Activated B cell treated with CpG ODN at 0.5 μM for 24 hours (primary cell): ENCODE measurements at regions of chr9 and their contacts with region 1.

Region 1: DNA sequence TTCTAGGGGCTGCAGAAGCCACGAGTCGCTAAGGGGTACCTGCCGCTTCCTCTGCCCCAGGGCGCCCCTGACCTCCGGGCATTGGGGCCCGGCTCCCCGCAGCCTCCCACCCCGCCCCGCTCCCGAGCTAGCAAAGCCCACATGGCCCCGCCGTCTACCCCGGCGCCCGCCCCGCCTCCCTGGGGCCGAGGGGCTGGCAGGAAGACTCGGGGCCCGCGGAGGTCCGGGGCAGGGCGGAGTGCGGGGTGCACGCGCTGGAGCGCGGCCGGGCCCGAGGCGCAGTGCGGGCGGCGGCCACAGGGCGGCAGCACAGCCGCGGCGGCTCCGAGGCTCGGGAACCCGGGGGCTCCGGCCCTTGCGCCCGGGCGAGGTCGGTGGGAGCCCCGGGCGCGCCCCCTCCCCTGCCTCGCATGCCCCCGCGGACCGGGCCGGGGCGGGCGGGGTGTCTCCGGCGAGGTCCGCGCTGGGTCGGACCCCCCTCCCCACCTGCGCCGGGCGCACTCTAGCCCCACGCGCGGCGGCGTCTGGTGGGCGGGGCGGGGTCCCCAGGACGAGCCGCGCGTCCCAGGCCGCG is 6.7 kb downstream of the NRARP start:
- DNase-seq: peak; percentile 75
- ATAC-seq: peak; percentile 93
- H3K4me3 Mint-ChIP-seq: no peak overlapping the region
- H3K27ac Mint-ChIP-seq: no peak overlapping the region
- H3K4me1 Mint-ChIP-seq: peaks cover 13% of the 10 kb centered on the region
- H3K27me3 Mint-ChIP-seq: peaks cover 26% of the 10 kb centered on the region
- CTCF ChIP-seq: no peak

Region 2: DNA sequence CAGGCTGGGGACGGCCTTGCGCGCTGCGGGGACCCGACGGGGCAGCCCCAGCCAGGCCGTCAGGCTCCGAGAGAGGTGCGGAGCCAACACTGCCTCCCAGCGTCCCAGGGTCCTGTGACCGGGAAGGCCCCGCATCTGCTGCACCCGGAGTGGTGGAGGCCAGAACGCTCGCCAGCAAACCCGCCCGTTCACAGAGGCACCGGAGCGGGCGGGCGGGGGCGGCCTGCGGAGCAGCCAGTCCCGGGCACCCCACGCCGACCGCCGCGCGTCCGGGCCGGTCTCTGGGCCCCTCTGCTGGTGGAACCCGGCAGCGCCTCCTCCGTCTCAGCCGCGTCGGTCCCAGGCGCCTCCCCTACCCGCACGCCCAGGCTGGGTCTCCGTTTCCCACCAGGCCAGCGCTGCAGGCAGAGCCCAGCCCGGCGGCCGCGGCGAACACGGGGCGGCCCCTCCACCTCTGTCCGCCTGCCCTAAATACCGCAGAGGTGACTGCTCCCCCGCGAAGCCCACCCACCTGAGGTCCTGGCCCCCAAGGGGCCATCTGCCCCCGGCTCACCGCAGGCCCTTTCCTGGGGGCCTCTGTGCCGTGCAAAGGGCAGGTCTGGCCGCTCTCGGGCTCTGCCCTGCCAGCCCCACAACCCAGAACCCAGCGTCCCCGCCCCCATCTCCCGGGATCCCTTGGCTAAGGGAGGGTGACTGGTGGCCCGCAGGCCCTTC is 111.7 kb after region 1 on chr9:
- CTCF ChIA-PET with region 1: no interaction called
- POLR2A ChIA-PET with region 1: no interaction called
- intact Hi-C with region 1: loop called (anchors 2 kb)
- DNase-seq: peak; percentile 55
- ATAC-seq: peak; percentile 81
- H3K4me3 Mint-ChIP-seq: no peak overlapping the region
- H3K27ac Mint-ChIP-seq: no peak overlapping the region
- H3K4me1 Mint-ChIP-seq: peaks cover 21% of the 10 kb centered on the region
- H3K27me3 Mint-ChIP-seq: peaks cover 2% of the 10 kb centered on the region
- CTCF ChIP-seq: no peak

Region 3: DNA sequence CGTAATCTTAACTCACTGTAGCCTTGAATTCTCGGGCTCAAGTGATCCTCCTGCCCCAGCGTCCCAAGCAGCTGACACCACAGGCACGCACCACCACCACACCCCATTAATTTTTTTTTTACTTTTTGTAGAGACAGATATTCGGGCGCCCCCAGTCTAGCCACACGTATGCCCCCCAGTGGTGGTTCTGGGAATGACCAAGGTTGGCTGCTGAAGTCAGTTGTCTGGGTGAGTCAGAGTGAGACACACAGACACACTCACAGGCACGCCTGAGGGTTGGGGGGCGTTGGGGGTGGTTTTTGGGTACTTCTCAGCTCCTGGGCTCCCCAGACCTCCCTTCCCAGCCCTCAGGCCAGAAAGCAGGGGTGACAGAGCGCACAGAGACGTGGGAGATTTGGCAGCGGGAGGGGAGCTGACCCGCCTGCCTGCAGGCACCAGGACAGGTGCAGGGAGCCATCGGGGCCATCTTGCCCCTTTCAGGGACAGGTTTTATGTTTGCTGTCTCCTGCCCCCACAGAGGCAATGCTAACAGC is 150.0 kb after region 1 on chr9:
- CTCF ChIA-PET with region 1: no interaction called
- POLR2A ChIA-PET with region 1: interaction called, 5 read pairs
- intact Hi-C with region 1: loop called (anchors 2 kb)
- DNase-seq: peak; percentile 73
- ATAC-seq: peak; percentile 94
- H3K4me3 Mint-ChIP-seq: peak overlapping the region; percentile 24
- H3K27ac Mint-ChIP-seq: no peak overlapping the region
- H3K4me1 Mint-ChIP-seq: peaks cover 8% of the 10 kb centered on the region
- H3K27me3 Mint-ChIP-seq: peaks cover 9% of the 10 kb centered on the region
- CTCF ChIP-seq: peak; percentile 89

Region 4: DNA sequence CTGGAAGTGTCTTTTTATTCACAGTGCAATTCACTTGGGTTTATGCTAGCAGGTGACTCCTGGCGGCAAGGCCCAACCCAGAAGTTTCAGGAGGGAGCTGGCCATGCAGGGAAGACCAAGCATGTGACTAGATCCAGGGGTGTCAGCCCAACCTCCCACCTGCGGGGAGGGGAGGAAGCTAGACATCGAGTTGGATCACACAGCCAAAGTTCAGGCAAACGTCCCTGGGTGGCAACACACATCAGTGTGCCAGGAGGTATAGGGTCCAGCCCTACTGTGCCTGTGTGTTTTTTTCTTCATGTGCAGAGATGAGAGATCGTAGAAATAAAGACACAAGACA is 229.6 kb after region 1 on chr9:
- CTCF ChIA-PET with region 1: no interaction called
- POLR2A ChIA-PET with region 1: no interaction called
- intact Hi-C with region 1: loop called (anchors 5 kb)
- DNase-seq: no peak
- ATAC-seq: no peak
- H3K4me3 Mint-ChIP-seq: no peak overlapping the region
- H3K27ac Mint-ChIP-seq: no peak overlapping the region
- H3K4me1 Mint-ChIP-seq: peaks cover 7% of the 10 kb centered on the region
- H3K27me3 Mint-ChIP-seq: no peaks in the 10 kb centered on the region
- CTCF ChIP-seq: no peak

Region 5: DNA sequence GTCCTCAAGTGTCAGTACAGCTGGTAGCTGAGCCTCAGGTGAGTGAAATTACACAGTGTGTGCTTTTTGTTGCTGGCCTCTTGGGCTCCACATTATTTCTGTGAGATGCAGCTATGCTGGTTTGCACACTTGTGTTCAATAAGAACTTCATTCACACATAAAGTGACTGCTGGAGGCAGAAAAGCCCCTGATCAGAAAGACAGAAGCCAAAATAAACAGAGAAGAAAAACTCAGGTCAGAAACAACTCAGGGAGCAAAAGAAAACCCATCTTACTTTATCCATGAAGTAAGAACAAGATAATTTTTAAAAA is 239.7 kb after region 1 on chr9:
- CTCF ChIA-PET with region 1: no interaction called
- POLR2A ChIA-PET with region 1: no interaction called
- intact Hi-C with region 1: no loop called
- DNase-seq: no peak
- ATAC-seq: no peak
- H3K4me3 Mint-ChIP-seq: no peak overlapping the region
- H3K27ac Mint-ChIP-seq: peak overlapping the region; percentile 32
- H3K4me1 Mint-ChIP-seq: peaks cover 37% of the 10 kb centered on the region
- H3K27me3 Mint-ChIP-seq: no peaks in the 10 kb centered on the region
- CTCF ChIP-seq: no peak